ENCODE measurements at regions of chr16 and their contacts with region 1.

Region 1: GRCh38 chr16:85010931-85011845 is at the start of gene ZDHHC7:
- DNase-seq: peak; percentile 77
- H3K4me3 ChIP-seq: peak within 1 kb of the TSS; percentile 68 to 96 (median 78)
- H3K27ac ChIP-seq: peak within 1 kb of the TSS; percentile 80
- H3K4me1 ChIP-seq: peaks cover 14% of the 10 kb centered on the region
- H3K27me3 ChIP-seq: no peaks in the 10 kb centered on the region
- CTCF ChIP-seq: no peak
- total RNA-seq, gene ZDHHC7: 46.9 to 83.4 TPM

Region 2: DNA sequence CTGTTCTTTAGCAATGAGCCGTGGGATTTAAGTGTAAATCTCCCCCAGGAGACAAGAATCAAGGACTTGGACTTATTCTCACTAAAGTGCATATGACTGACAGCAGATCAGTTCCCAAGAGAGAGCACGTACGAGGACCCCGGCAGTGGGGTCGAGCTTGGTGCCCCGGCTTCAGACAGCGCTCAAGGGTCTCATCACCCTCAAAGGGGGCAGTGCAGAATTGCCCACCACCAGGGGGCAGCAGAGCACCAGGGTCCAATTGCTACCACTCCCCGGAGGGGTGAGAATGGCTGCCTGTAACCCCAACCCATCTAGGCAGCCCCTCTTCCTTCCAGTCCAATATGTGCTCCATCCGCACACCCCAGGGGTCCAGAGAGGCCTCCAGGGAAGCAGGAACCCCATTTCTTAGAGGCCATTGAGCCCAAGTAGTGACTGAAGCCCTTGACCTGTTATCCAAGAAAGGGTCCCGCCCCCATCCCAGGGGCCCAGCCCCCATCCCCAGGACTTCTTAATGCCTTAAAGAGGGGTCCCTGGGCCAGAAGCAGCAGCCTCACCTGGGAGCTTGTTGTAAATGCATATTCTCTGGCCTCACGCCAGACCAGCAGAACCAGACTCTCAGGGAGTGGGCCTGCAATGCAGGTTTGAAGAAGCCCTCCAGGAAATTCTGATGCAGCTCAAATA is 86.0 kb before region 1 on chr16:
- CTCF ChIA-PET with region 1: no interaction called
- dilution Hi-C with region 1: loop called (anchors 5 kb)
- in situ Hi-C with region 1: no loop called
- intact Hi-C with region 1: no loop called
- DNase-seq: no peak
- H3K4me3 ChIP-seq: no peak overlapping the region
- H3K27ac ChIP-seq: no peak overlapping the region
- H3K4me1 ChIP-seq: no peaks in the 10 kb centered on the region
- H3K27me3 ChIP-seq: no peaks in the 10 kb centered on the region
- CTCF ChIP-seq: peak; percentile 81 to 92

Region 3: DNA sequence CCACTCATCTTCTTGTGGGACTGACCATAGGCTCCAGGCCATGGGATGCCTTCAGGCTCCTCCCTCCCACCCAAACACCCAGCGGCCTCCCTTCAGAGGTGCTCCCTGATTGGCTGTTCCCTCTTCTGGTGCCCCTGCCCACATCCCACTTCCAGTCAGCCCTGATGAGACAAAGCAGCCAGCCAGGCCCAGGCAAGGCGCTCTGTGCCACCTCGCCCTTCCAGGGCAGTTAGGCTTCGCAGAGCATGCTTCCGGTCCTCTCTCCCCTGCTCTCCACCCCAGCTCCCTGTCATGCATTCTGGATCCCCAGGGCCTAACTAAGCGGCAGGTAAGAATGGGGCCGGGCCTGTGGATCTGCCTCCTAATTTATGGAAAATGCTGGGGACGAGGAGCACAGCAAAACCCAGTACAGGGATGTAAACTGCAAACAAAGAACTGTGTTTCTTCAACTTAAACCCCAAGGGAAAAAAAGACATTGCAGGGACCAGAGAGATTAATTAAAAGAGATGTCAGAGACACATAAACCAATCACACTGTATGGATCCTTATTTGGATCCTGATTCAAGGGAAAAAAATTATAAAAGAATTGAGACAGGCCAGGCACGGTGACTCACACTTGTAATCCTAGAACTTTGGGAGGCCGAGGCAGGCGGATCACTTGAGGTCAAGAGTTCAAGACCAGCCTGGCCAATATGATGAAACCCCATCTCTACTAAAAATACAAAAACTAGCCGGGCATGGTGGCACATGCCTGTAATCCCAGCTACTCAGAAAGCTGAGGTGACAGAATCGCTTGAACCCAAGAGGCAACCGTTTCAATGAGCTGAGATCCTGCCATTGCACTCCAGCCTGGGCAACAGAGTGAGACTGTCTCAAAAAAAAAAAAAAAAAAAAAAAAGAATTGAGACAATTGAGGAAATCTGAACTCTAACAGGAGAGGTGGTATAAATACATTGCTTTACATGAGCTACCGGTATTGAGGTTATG is 25.8 kb before region 1 on chr16:
- CTCF ChIA-PET with region 1: no interaction called
- dilution Hi-C with region 1: no loop called
- in situ Hi-C with region 1: no loop called
- intact Hi-C with region 1: loop called (anchors 1 kb)
- DNase-seq: peak; percentile 77
- H3K4me3 ChIP-seq: no peak overlapping the region
- H3K27ac ChIP-seq: peak overlapping the region; percentile 57
- H3K4me1 ChIP-seq: peaks cover 20% of the 10 kb centered on the region
- H3K27me3 ChIP-seq: no peaks in the 10 kb centered on the region
- CTCF ChIP-seq: no peak

Region 4: GRCh38 chr16:85077039-85077438 is 65.9 kb after region 1 on chr16:
- CTCF ChIA-PET with region 1: no interaction called
- dilution Hi-C with region 1: loop called (anchors 5 kb)
- in situ Hi-C with region 1: no loop called
- intact Hi-C with region 1: no loop called
- DNase-seq: no peak
- H3K4me3 ChIP-seq: no peak overlapping the region
- H3K27ac ChIP-seq: no peak overlapping the region
- H3K4me1 ChIP-seq: no peaks in the 10 kb centered on the region
- H3K27me3 ChIP-seq: no peaks in the 10 kb centered on the region
- CTCF ChIP-seq: no peak

Region 5: DNA sequence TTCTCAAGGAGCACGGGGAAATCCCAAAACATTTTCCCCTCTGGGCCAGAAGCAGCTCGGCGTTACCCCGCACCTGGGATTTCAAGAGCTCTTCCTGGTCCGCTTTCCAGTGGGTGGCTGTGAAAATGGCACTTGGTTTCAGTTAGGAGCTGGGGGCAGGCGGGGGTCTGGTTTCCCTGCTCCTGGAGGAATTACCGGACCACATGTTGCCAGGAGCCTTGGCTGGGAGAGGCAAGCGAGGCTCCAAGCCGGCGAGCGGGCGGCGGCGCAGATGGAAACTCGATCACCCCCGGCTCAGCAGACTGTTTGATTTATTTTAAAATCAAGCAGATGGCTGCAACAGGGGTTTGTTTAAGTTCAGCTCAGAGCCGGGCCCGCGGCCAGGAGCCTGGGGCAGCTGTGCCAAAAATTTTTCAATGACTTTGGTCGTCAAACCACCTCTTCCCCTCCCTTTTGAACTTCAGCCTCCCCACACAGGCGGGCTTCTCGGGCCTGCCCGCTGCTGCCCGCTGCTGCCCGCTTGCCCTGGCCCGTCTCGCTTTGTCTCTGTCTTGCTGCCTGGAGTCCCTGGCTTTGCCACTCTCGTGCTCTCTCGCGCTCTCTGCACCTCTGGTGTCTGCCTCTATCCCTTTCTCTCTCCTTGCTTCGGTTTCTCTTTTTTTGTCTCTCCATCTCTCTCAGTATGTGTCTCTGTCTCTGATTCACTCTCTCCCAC is 209.1 kb after region 1 on chr16:
- CTCF ChIA-PET with region 1: no interaction called
- dilution Hi-C with region 1: no loop called
- in situ Hi-C with region 1: no loop called
- intact Hi-C with region 1: no loop called
- DNase-seq: peak; percentile 76
- H3K4me3 ChIP-seq: peak overlapping the region; percentile 16 to 38 (median 23)
- H3K27ac ChIP-seq: peak overlapping the region; percentile 68
- H3K4me1 ChIP-seq: peaks cover 14% of the 10 kb centered on the region
- H3K27me3 ChIP-seq: no peaks in the 10 kb centered on the region
- CTCF ChIP-seq: peak in 1 of 2 donors; percentile 10